Psoas muscle (tissue), 8 donors: ENCODE measurements at regions of chr11 and their contacts with region 1.

Region 1: DNA sequence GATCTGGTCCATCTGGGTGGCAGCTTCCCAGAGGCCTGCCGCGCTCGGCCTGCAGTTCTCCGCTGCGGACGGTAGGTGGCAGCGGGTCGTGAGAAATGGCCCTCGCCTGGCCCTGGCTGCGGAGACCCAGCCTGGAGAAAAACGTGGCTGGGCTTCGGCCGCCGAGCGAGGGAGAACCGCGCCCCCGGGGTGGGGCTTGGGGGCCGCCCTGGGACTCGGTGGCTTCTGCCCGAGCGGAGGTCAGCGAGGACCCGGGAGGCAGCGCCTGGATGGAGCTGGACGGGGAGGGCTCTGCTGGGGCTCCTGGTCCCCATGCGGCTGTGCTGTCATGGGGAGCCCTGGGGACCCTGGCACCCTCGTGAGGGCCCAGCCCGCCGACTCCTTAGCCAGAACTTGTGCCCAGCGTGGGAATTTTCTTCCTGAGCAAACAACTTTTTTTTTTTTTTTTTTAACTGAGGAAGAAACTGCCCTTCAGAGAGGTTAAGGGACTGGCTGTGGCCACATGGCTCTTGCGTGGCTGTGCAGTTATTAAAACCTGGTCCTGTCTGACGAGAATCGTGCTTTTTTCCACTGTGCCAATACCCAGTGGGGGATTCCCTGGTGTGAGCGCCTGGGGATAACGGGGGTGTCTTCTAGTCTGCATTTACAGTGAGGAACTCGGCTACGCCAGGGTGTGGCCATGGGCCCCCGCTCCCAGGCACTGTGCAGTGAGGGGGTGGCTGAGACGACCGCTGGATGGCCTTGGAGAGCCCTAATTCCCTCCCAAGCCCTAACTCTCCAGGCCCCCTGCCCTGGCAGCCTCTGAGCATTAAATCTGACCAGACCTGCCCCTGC is 535.6 kb downstream of the INSC start:
- DNase-seq: peak; percentile 95 to 96
- ATAC-seq: peak; percentile 96 to 99 (median 98)
- H3K4me3 ChIP-seq: peak overlapping the region; percentile 62
- H3K27ac ChIP-seq: peak overlapping the region; percentile 76
- H3K4me1 ChIP-seq: peaks cover 20% of the 10 kb centered on the region
- H3K27me3 ChIP-seq: no peaks in the 10 kb centered on the region
- CTCF ChIP-seq: peak; percentile 99

Region 2: DNA sequence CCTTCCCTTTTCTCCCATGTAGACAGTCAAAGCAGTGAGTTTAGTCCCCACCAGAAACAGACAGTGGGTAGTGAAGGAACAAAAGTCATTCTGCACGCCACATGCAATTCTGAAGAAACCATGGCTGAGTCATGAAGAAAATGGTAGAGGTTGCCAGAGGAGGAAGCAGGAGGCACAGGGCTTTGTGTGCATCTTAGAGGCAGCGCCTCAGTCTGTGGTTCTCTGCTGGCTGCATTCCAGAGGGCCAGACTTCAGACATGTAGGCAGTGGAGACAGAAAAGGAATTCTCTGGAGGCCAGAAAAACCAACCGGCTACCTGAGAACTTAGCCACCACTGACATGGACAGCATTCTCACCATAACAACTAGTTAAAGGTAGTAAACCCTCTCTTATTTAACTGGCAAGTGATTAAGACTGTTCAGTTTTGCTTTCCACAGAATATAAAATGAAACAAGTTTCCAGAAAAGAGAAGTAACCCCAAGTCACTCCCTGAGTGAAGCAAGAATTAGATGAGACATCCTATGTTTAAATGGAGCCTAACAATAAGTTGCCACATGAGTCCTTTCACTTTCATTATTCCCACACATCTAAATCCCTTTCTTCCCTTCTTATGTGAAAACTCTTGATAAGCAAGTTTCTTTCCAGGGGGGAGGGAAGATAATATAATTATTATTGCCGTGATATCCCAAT is 149.9 kb after region 1 on chr11:
- intact Hi-C with region 1: no loop called
- DNase-seq: peak; percentile 46 to 54
- ATAC-seq: peak in 2 of 4 donors; percentile 38 to 42
- H3K4me3 ChIP-seq: no peak overlapping the region
- H3K27ac ChIP-seq: no peak overlapping the region
- H3K4me1 ChIP-seq: peaks cover 6% of the 10 kb centered on the region
- H3K27me3 ChIP-seq: no peaks in the 10 kb centered on the region
- CTCF ChIP-seq: no peak

Region 3: DNA sequence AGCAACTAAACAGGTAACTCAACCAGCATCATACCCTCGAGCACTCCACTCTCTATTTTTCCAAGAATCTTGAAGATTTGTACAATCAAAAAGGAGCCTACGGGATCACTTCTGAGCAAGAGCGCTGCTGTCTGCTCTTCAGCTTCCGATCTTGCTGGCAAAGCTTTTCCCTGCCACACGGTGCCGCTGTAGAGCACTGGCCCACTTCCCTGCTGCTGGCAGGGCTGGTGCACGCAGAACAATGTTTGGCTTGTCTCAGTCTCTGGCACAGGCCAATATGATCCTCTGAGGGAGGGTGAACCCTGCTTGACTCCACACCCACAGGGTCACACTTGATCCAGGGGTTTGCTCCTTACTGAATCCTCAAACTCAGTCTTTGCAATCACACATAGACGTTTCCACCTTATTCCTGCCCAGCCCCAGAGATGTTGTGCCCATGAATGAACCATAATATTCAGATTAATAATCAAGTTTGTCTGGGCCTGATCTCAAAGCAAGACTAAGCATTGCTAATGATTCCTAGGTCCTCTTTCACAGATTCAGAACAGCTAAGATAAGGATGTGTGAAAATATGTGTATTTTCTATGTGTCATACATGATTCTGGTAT is 169.5 kb after region 1 on chr11:
- intact Hi-C with region 1: loop called (anchors 5 to 10 kb)
- DNase-seq: peak; percentile 66 to 87
- ATAC-seq: peak; percentile 90 to 94 (median 92)
- H3K4me3 ChIP-seq: no peak overlapping the region
- H3K27ac ChIP-seq: no peak overlapping the region
- H3K4me1 ChIP-seq: peaks cover 21% of the 10 kb centered on the region
- H3K27me3 ChIP-seq: no peaks in the 10 kb centered on the region
- CTCF ChIP-seq: peak; percentile 90

Region 4: DNA sequence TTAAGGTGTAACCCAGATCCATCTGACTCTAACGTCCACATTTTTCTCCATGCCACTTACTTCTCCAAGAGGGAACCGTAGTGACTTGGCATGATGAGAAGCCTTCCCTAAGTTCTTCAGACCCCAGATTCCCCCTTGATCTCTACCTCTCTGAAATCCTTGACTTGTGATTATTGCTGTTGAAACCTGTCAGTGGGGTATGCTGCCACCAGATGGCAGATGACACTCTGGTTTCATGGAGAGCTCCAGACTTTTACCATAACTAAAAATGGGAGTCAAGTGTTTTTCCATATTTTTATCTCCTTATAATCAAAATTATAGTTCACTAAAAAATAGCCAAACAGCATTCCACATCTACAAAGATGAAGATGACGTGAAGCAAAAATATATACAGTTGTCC is 201.9 kb after region 1 on chr11:
- intact Hi-C with region 1: no loop called
- DNase-seq: no peak
- ATAC-seq: peak in 3 of 4 donors; percentile 63 to 85 (median 66)
- H3K4me3 ChIP-seq: no peak overlapping the region
- H3K27ac ChIP-seq: no peak overlapping the region
- H3K4me1 ChIP-seq: no peaks in the 10 kb centered on the region
- H3K27me3 ChIP-seq: no peaks in the 10 kb centered on the region
- CTCF ChIP-seq: peak; percentile 62

Region 5: DNA sequence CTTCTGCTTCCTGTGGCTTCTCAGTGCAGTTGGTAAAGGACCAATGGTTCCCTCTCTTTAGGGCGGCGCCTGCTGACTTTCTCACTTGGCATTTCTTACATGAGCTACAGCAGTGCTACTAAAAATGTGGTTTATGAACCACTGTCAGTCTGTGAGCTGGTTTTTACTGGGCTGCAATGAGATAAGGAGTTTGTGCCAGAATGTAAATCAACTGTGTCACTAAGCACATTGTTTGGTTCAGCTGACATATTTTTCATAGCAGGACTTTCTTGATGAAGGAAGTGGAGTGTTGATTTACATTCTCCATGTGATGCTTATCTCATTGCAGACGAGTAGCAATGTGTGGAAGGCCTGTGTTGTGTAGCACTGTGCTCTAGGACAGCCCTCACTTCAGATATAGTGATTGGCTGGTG is 242.8 kb after region 1 on chr11:
- intact Hi-C with region 1: loop called in 1 of 2 experiments (anchors 10 kb)
- DNase-seq: no peak
- ATAC-seq: peak; percentile 16 to 43 (median 36)
- H3K4me3 ChIP-seq: no peak overlapping the region
- H3K27ac ChIP-seq: peak overlapping the region; percentile 41
- H3K4me1 ChIP-seq: peaks cover 30% of the 10 kb centered on the region
- H3K27me3 ChIP-seq: no peaks in the 10 kb centered on the region
- CTCF ChIP-seq: no peak

Region 6: DNA sequence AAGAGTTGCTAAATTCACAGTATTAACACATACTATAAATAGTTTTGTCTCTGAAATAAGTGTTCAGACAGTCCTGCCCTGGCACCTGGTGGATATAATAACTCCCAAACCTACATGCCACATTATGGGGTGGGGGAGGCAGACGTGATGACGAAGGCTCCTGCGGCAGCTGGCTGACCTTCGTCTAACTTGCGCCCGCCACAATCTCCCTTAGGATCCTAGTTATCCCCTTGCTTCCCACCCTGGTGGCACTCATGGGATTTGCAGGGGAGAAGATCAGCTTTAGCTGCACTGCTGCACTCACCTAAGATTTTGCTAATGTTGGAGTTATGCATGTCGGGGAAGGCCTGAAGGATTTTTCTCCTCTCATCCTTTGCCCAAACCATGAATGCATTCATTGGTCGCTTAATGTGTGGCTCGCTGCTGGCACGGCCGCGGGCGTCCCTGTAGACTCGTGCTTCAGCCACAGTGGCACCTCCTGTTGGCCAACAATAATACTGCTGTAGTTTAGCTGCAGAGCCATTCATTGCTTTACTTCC is 338.4 kb after region 1 on chr11:
- intact Hi-C with region 1: loop called in 1 of 2 experiments (anchors 10 kb)
- DNase-seq: peak in 1 of 2 donors; percentile 49
- ATAC-seq: peak; percentile 67 to 94 (median 81)
- H3K4me3 ChIP-seq: no peak overlapping the region
- H3K27ac ChIP-seq: peak overlapping the region; percentile 39
- H3K4me1 ChIP-seq: peaks cover 38% of the 10 kb centered on the region
- H3K27me3 ChIP-seq: no peaks in the 10 kb centered on the region
- CTCF ChIP-seq: peak; percentile 36

Region 7: GRCh38 chr11:16613512-16614381 is 963.4 kb after region 1 on chr11:
- intact Hi-C with region 1: loop called in 1 of 2 experiments (anchors 5 kb)
- DNase-seq: peak; percentile 87 to 93
- ATAC-seq: peak; percentile 97 to 99 (median 98)
- H3K4me3 ChIP-seq: peak overlapping the region; percentile 71
- H3K27ac ChIP-seq: peak overlapping the region; percentile 87
- H3K4me1 ChIP-seq: no peaks in the 10 kb centered on the region
- H3K27me3 ChIP-seq: peaks cover 0 to 8% (median 0%) of the 10 kb centered on the region in 3 donors
- CTCF ChIP-seq: peak; percentile 92